Activated naive CD4-positive, alpha-beta T cell treated with anti-CD3 and anti-CD28 coated beads for 36 hours (primary cell): ENCODE measurements at regions of chr22 and their contacts with region 1.

Region 1: DNA sequence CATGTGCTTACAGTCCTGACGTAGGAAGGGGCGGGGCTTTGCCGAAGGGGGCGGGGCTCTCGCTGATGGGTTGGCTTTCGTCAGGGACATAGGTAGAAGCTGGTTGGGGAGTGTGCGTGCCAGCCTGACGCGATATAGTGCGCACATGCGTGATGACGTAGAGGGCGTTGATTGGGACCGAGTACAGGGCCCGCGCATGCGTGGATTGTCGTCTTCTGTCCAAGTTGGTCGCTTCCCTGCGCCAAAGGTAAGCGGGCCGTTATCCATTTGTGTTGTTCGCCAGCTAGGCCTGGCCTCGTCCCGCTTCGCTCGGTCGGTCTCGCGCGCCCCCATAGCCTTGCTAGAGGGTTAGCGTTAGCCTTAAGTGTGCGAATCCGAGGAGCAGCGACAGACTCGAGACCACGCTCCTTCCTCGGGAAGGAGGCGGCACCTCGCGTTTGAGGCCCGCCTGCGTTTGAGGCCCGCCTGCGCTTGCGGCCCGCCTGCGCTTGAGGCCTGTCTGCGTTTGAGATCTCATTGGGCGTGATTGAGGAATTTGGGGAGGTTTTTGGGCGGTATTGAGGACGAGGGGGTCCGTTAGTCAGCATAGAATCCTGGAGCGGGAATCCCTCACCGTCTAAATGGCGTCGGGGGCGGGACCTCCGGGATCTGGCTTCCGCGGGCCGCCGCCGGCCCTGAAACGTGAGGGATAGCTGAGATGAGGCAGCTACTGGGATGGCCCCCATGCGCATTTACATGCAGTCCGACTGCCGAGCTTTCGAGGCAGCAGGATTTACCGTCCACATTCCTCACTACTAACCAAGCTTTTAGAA is at the start of gene XRCC6:
- DNase-seq: peak; percentile 100
- H3K4me3 Mint-ChIP-seq: peak within 1 kb of the TSS; percentile 98
- H3K27ac Mint-ChIP-seq: peak within 1 kb of the TSS; percentile 98
- H3K4me1 Mint-ChIP-seq: peaks cover 56% of the 10 kb centered on the region
- H3K27me3 Mint-ChIP-seq: no peaks in the 10 kb centered on the region
- total RNA-seq, gene XRCC6: 424 to 436 TPM

Region 2: DNA sequence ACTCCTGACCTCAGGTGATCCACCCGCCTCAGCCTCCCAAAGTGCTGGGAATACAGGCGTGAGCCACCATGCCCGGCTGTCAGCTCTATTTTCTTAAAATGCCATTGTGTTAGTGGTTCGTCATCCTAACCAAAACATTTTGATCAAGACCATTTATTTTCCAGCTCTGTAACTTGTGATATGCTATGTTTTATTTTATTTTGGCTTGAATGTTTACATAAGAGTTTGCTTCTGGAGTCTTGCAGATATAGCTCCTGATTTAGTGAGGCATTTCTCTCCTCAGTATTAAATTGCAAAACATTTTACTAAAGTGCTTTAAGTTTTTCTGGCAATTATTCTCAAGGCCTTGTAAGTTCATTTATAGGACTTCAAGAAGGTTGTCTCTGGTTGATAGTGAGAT is 524.5 kb before region 1 on chr22:
- CTCF ChIA-PET with region 1: no interaction called
- intact Hi-C with region 1: no loop called
- DNase-seq: no peak
- H3K4me3 Mint-ChIP-seq: no peak overlapping the region
- H3K27ac Mint-ChIP-seq: peak overlapping the region; percentile 48
- H3K4me1 Mint-ChIP-seq: peaks cover 60% of the 10 kb centered on the region
- H3K27me3 Mint-ChIP-seq: no peaks in the 10 kb centered on the region

Region 3: GRCh38 chr22:41301105-41302020 is 319.9 kb before region 1 on chr22 and contains the start of gene ZC3H7B:
- CTCF ChIA-PET with region 1: no interaction called
- intact Hi-C with region 1: loop called (anchors 5 kb)
- DNase-seq: peak; percentile 88
- H3K4me3 Mint-ChIP-seq: peak within 1 kb of the TSS; percentile 74
- H3K27ac Mint-ChIP-seq: peak within 1 kb of the TSS; percentile 76
- H3K4me1 Mint-ChIP-seq: peaks cover 37% of the 10 kb centered on the region
- H3K27me3 Mint-ChIP-seq: no peaks in the 10 kb centered on the region
- total RNA-seq, gene ZC3H7B: 30.0 to 30.3 TPM

Region 4: GRCh38 chr22:41468381-41469217 is 152.7 kb before region 1 on chr22 and contains the starts of genes ACO2 and PHF5A:
- CTCF ChIA-PET with region 1: no interaction called
- intact Hi-C with region 1: loop called (anchors 1 kb)
- DNase-seq: peak; percentile 99
- H3K4me3 Mint-ChIP-seq: peak within 1 kb of the TSS; percentile 75
- H3K27ac Mint-ChIP-seq: peak within 1 kb of the TSS; percentile 96
- H3K4me1 Mint-ChIP-seq: peaks cover 62% of the 10 kb centered on the region
- H3K27me3 Mint-ChIP-seq: no peaks in the 10 kb centered on the region
- total RNA-seq, gene ACO2: 113 to 118 TPM
- total RNA-seq, gene PHF5A: 67.5 to 69.0 TPM

Region 5: DNA sequence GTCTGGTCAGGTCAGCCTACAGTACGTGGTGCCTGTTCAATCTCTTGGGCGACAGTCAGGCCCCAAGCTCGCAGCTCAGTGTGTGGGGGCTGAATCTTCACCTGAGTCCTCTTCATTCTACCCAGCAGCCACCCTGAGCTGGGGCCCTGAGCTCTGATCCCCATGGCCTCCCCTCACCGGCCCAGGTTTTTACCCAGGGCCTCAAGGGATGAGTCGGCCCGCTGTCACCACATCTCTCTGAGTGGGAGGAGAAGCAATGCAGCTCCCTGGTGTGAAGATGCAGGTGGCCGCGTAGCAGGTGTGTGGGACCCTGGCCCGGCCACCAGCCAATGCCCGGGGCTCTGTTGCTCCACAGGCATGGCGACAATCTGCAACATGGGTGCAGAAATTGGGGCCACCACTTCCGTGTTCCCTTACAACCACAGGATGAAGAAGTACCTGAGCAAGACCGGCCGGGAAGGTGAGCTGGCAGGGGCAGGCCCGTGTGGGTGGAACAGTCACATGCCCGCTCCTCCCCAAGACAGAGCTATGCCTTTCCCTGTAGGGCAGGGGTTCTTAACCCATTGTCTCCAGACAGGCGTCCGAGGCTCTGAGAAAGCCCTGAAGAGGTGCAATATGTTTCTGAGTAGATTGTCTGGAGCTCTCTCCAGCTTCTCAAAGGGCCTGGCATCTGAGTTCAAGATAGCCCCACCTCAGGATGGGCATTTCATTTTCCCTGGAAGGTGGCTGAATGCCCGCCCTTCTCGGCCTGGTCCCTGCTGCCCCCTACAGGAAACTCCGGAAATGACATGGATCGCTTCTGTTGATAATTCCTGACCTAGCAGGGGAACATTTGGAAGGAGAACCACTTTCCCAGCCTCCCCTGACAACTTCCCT is 103.9 kb before region 1 on chr22:
- CTCF ChIA-PET with region 1: no interaction called
- intact Hi-C with region 1: no loop called
- DNase-seq: peak; percentile 56
- H3K4me3 Mint-ChIP-seq: no peak overlapping the region
- H3K27ac Mint-ChIP-seq: no peak overlapping the region
- H3K4me1 Mint-ChIP-seq: peaks cover 11% of the 10 kb centered on the region
- H3K27me3 Mint-ChIP-seq: no peaks in the 10 kb centered on the region

Region 6: DNA sequence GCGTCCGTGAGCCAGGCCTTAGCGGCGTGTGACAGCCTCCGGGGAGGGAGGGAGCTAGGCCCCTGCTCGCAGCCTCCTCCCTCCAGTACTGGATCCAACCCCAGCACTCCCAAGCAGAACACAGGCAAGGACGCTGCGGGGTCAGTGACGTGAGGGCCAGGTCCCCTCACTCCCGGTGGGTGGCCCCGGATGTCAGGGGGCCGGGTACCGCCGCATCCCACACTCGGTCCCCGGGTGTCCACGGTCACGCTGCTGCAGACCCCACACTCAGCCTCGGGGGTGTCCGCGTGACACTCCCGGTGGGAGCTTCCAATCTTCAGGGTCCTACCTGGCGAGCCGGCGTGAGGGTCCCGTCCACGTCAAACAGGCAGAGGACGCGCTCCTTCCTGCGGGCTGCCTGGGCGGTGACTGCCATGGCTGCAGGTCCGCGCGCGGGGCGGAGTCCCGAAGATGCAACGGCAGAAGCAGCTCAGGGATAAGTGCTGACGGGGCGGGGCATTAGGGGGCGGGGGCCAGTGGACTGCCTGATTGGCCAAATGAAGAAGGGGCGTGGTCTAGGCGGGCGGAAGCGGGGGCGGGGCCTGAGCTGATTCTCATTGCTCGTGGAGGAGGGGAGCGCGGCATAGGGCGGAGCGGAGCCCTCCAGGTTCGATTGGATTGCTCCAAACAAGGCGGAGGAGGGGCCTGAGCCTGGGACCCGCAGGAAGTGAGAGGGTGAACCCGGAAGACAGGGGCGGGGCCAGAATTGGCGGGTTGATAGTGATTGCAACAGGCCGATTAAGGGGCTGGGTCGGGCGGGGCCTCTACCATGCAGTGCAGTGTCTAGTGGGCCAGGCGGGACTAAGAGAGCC is 31.7 kb before region 1 on chr22 and contains the start of gene PMM1:
- CTCF ChIA-PET with region 1: interaction called, 4 read pairs
- intact Hi-C with region 1: loop called (anchors 1 kb)
- DNase-seq: peak; percentile 100
- H3K4me3 Mint-ChIP-seq: peak within 1 kb of the TSS; percentile 93
- H3K27ac Mint-ChIP-seq: peak within 1 kb of the TSS; percentile 84
- H3K4me1 Mint-ChIP-seq: peaks cover 12% of the 10 kb centered on the region
- H3K27me3 Mint-ChIP-seq: no peaks in the 10 kb centered on the region
- total RNA-seq, gene PMM1: 35.3 to 35.6 TPM

Region 7: DNA sequence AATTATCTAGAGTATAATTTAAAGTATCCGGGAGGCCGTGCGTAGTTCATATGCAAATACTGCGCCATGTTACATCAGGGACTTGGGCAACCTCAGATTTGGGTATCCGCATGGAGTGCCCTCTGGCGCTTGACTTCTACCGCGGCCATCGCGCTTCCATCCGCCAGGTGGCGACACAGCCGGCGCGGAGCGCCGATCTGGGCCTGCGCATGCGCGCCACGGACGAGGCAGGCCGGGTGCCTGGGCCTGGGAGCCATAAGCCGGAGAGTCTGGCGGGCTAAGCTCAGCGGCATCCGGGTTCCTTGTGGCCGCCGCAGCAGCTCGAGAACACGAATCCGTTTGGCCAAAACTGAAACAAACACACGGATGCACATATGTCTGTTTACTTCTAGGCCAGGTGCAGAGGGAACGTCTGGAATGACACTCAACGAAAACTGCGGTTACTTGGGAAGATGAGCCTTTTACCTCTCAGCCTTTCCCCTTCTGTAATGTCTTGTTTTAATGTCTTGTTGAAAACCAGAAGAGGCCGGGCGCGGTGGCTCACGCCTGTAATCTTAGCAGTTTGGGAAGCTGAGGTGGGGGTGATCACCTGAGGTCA is 45.5 kb after region 1 on chr22:
- CTCF ChIA-PET with region 1: interaction called, 7 read pairs
- intact Hi-C with region 1: loop called (anchors 1 kb)
- DNase-seq: peak; percentile 94
- H3K4me3 Mint-ChIP-seq: peak overlapping the region; percentile 81
- H3K27ac Mint-ChIP-seq: peak overlapping the region; percentile 95
- H3K4me1 Mint-ChIP-seq: peaks cover 17% of the 10 kb centered on the region
- H3K27me3 Mint-ChIP-seq: no peaks in the 10 kb centered on the region

Region 8: GRCh38 chr22:42079319-42080251 is 458.3 kb after region 1 on chr22 and contains the start of gene SMDT1:
- CTCF ChIA-PET with region 1: no interaction called
- intact Hi-C with region 1: loop called (anchors 1 kb)
- DNase-seq: peak; percentile 98
- H3K4me3 Mint-ChIP-seq: peak within 1 kb of the TSS; percentile 95
- H3K27ac Mint-ChIP-seq: peak within 1 kb of the TSS; percentile 96
- H3K4me1 Mint-ChIP-seq: peaks cover 34% of the 10 kb centered on the region
- H3K27me3 Mint-ChIP-seq: no peaks in the 10 kb centered on the region
- total RNA-seq, gene SMDT1: 50.2 to 56.2 TPM